Transverse colon (tissue), 4 donors: ENCODE measurements at regions of chr2 and their contacts with region 1.

Region 1: DNA sequence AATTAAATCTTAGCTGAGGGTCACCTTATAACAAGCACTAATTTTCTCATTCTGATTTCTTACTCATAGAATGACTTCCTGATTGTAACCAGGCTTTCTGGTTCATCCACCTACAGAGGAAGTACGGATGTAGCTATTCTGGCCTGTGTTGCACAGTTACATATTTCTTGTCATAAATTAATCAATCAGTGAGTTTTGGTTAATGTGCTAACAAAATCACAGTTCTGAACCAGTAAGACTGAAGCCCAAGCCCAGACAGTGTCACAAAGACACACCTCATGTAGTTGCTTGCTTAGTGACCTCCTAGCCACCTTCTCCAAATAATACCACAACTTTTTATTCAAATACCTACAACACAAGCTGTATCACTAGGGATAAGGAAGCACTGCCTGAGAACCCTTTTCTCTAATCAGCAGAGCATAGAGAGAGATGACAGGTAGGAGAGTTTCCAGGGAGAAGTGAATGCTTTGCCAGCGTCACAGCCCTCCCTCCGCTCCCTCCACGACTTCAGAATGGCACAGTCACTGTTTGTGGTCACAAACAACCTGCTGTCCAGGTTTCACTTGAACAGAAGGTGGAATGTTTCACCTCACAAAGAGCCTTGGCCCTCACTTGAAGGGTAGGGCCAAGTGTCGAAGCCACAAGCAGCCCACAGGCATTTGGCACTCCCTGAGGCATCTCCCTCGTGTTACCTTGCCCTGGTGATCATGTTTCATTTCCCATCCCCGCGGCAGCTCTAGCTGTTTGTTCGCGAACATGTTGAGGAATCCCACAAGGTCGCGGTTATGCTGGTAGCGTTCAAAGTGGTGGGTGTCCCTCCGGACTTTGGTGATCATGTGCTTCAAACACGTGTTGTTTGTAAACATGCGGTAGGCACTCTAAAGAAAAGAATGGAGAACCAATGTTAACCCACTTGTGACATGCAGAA is 120.8 kb upstream of the STK17B start:
- DNase-seq: no peak
- H3K4me3 ChIP-seq: no peak overlapping the region
- H3K27ac ChIP-seq: no peak overlapping the region
- H3K4me1 ChIP-seq: no peaks in the 10 kb centered on the region
- H3K27me3 ChIP-seq: no peaks in the 10 kb centered on the region
- CTCF ChIP-seq: no peak
- EP300 ChIP-seq: no peak
- POLR2A ChIP-seq: no peak

Region 2: DNA sequence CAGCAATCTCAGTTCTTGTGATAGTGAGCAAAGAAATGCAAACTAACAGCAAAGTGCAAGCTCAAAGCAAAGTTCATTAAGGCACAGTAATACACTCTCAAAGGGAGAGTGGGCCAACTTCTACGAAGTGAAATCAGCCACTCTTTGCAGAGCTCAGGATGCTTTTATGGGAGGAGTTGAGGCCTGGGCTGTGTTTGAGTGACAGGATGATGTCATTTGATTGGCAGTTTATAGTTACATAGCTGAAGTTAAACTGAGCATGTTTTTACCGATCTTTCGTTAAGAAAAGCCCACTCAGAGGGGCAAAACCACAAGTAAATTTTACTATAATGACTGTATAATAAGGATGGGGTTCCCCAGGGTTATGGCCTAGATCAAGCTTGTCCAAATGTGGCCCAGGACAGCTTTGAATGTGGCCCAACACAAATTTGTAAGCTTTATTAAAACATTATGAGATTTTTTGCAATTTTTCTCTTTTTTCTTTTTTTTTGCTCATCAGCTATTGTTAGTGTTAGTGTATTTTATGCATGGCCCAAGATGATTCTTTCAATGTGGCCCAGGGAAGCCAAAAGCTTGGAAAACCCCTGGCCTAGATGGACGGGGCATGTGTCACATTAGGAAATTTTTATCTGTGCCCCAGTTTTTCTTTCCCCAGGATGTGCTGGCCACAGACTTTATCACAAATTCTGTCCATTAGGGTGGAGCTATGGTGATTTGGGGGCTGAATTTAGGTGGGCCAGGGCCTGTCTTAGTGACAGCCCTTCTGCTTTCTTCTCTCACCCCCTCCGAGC is 215.2 kb before region 1 on chr2:
- in situ Hi-C with region 1: loop called in 2 of 4 experiments (anchors 10 to 25 kb)
- intact Hi-C with region 1: no loop called
- DNase-seq: no peak
- H3K4me3 ChIP-seq: no peak overlapping the region
- H3K27ac ChIP-seq: peak overlapping the region in 2 of 4 donors; percentile 16 to 18
- H3K4me1 ChIP-seq: peaks cover 0 to 39% (median 9%) of the 10 kb centered on the region in 4 donors
- H3K27me3 ChIP-seq: no peaks in the 10 kb centered on the region
- CTCF ChIP-seq: no peak
- EP300 ChIP-seq: no peak
- POLR2A ChIP-seq: no peak

Region 3: DNA sequence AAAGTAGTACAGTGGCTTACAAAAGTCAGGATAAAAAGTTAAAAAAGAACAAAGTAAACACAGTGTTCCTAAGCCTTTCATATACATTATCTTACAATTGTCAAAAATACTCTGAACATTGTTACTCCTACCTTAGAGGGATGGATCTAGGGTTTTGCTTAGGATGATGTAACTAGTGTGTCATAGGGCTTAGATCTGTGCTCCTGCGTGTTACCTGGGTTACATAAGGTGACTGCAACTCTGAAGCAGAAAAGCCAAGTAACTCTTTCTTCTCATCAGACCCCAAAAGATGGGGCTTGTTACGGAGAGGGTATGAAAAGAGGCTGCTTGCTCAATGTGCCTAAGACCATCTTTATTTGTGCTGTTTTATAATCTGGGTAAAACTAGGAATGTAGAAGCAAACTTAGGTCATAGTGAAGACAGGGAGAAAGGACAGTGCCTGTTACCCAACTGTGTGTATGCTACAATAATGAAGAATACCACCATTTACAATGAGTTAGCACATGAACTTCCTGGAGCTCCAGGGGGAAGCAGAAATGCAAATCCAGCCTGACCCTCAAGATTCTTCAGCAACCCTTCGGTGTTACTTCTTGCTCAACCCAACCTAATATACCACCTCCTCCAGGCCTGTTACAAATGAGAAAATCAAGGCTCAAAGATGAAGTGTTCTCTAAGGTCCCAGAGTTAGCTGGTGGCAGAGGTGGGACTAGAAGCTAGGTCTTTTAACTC is 78.7 kb before region 1 on chr2:
- in situ Hi-C with region 1: no loop called
- intact Hi-C with region 1: no loop called
- DNase-seq: no peak
- H3K4me3 ChIP-seq: no peak overlapping the region
- H3K27ac ChIP-seq: no peak overlapping the region
- H3K4me1 ChIP-seq: no peaks in the 10 kb centered on the region
- H3K27me3 ChIP-seq: no peaks in the 10 kb centered on the region
- CTCF ChIP-seq: no peak
- EP300 ChIP-seq: no peak
- POLR2A ChIP-seq: no peak

Region 4: GRCh38 chr2:196453613-196454047 is 161.5 kb after region 1 on chr2:
- in situ Hi-C with region 1: loop called in 2 of 4 experiments (anchors 10 kb)
- intact Hi-C with region 1: no loop called
- DNase-seq: peak; percentile 31
- H3K4me3 ChIP-seq: no peak overlapping the region
- H3K27ac ChIP-seq: no peak overlapping the region
- H3K4me1 ChIP-seq: peaks cover 0 to 3% (median 0%) of the 10 kb centered on the region in 4 donors
- H3K27me3 ChIP-seq: no peaks in the 10 kb centered on the region
- CTCF ChIP-seq: peak; percentile 27 to 41 (median 32)
- EP300 ChIP-seq: no peak
- POLR2A ChIP-seq: no peak